Caco-2 (cell line): ENCODE measurements at regions of chr10 and their contacts with region 1.

Region 1: GRCh38 chr10:31928549-31929260 is at the start of gene ARHGAP12:
- DNase-seq: peak; percentile 95 to 99
- H3K4me3 ChIP-seq: peak within 1 kb of the TSS; percentile 80
- H3K4me3 Mint-ChIP-seq: peak within 1 kb of the TSS; percentile 76
- H3K27ac Mint-ChIP-seq: peak within 1 kb of the TSS; percentile 97
- H3K4me1 ChIP-seq: peaks cover 12% of the 10 kb centered on the region; the same call in 1 of the 2 replicates
- H3K4me1 Mint-ChIP-seq: peaks cover 40% of the 10 kb centered on the region
- H3K27me3 ChIP-seq: no peaks in the 10 kb centered on the region
- H3K27me3 Mint-ChIP-seq: no peaks in the 10 kb centered on the region
- CTCF ChIP-seq: no peak
- total RNA-seq, gene ARHGAP12: 62.3 and 63.1 TPM in 2 replicates

Region 2: DNA sequence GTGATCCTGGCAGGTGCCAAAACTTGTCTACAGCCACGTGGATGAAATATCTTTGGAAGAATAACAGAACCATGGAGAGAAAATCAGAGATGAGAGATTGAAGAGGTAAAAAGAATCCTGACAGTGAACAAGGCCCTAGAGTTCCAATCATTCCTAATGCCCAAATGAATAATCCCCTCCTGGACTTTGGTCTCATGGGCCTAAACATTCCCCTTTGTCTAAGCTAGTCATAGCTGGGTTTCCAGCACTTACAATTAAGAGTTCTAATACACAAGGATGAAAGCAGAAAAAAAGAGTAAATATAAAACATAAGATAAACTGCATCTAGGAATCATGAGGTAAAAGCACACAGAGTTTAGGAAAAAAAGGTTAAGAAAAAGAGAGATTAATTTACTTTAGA is 40.3 kb before region 1 on chr10:
- CTCF ChIA-PET with region 1: interaction called, 5 read pairs
- POLR2A ChIA-PET with region 1: no interaction called
- intact Hi-C with region 1: loop called (anchors 2 kb)
- DNase-seq: peak in 1 of 2 experiments; percentile 40
- H3K4me3 ChIP-seq: no peak overlapping the region
- H3K4me3 Mint-ChIP-seq: peak overlapping the region; percentile 59
- H3K27ac Mint-ChIP-seq: peak overlapping the region; percentile 84
- H3K4me1 ChIP-seq: peaks cover 50% of the 10 kb centered on the region
- H3K4me1 Mint-ChIP-seq: peaks cover 44% of the 10 kb centered on the region
- H3K27me3 ChIP-seq: no peaks in the 10 kb centered on the region
- H3K27me3 Mint-ChIP-seq: no peaks in the 10 kb centered on the region
- CTCF ChIP-seq: no peak

Region 3: DNA sequence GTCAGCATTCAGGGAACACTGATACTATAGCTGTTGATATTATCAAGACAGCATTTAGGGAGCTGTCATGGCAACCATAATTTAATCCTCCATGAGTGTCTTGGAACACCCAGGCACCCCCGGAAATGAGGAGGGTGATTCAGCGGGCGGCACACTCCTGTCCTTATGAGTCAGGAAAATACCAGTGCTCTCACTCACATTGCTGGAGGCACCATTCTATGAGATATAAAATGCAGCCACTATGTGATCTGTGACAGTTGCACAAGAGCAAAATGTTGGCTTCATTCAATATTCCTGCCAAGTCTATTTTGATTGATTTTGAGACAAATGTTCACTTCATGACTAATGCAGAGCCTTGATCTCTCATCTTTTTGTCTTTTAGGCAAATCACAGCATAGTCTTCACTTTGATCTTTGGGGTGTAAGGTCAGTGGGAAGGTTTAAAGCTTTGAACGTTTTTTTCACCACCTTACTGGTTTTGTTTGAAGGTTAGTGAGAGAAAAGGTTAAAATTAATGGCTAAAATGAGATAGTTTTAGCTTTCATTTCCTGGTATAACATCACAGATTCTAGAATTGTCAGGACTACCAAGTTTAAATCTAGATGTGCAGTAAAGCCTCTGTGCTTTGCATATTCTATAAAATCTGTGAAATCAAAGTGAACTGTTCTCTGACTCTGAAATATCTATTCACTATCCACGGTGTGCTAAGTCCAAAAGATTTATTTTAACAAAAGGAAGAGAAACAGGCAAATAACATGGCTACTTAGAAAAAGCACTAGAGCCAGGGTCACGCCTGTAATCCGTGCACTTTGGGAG is 12.3 kb after region 1 on chr10:
- CTCF ChIA-PET with region 1: interaction called, 6 read pairs
- POLR2A ChIA-PET with region 1: interaction called, 3 read pairs
- intact Hi-C with region 1: loop called (anchors 1 kb)
- DNase-seq: peak; percentile 70 to 84
- H3K4me3 ChIP-seq: no peak overlapping the region
- H3K4me3 Mint-ChIP-seq: peak overlapping the region; percentile 43
- H3K27ac Mint-ChIP-seq: peak overlapping the region; percentile 16
- H3K4me1 ChIP-seq: peaks cover 70% of the 10 kb centered on the region
- H3K4me1 Mint-ChIP-seq: peaks cover 47% of the 10 kb centered on the region
- H3K27me3 ChIP-seq: no peaks in the 10 kb centered on the region
- H3K27me3 Mint-ChIP-seq: no peaks in the 10 kb centered on the region
- CTCF ChIP-seq: no peak

Region 4: DNA sequence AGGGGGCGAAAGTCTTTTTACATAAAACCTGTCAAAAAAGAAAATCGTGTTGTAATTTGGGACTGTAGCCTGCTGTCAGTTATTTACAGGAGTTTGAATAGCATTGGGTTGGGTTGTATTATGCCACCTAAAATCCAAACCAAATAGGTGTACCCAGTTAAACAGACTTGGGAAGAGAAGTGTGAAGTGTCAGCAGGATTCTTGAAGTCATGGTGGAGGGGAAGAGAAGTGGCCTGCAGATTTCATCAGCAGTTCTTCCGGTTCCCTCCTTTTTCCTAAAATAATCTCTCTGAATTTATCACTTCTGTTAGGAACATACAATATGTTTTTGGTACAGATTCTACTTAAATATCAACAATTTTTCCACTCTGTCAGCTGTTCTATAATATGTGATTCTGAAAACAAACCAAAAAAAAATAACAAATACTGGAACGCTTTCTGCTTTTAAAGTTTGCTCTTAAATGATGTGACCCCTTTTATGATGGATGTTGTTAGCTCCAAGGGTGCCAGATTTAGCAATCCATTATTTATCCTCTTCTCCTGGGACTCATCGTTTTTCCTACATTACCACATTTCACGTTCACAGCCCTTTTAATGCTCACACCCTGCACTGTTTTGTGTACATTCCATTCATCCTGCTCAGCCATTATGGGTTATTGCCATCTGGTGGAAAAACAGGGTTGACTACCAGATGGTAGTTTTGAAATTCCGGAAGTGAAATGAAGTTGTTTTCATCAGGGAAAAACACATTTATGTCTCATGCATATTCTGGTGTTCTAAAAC is 18.6 kb after region 1 on chr10:
- CTCF ChIA-PET with region 1: interaction called, 6 read pairs
- POLR2A ChIA-PET with region 1: interaction called, 7 read pairs
- intact Hi-C with region 1: loop called (anchors 1 kb)
- DNase-seq: peak; percentile 74 to 84
- H3K4me3 ChIP-seq: peak overlapping the region; percentile 10
- H3K4me3 Mint-ChIP-seq: peak overlapping the region; percentile 65
- H3K27ac Mint-ChIP-seq: peak overlapping the region; percentile 70
- H3K4me1 ChIP-seq: peaks cover 42% of the 10 kb centered on the region
- H3K4me1 Mint-ChIP-seq: peaks cover 26% of the 10 kb centered on the region
- H3K27me3 ChIP-seq: no peaks in the 10 kb centered on the region
- H3K27me3 Mint-ChIP-seq: no peaks in the 10 kb centered on the region
- CTCF ChIP-seq: peak; percentile 47 to 82

Region 5: DNA sequence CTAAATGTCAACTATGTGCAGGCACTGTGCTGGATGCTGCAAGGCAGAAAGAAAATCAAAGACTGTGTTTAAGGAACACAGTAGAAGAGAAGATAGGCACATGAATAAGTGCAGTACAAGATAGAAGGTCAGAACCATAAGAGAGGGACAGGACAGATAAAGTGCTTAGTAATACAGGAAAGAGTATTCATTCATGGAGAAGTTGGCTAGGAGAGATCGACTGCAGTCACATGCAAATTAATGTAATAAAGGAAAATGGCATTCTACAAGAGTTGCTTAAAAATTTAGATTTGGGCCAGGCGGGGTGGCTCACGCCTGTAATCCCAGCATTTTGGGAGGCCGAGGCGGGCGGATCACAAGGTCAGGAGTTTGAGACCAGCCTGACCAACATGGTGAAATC is 102.7 kb after region 1 on chr10:
- CTCF ChIA-PET with region 1: no interaction called
- POLR2A ChIA-PET with region 1: no interaction called
- intact Hi-C with region 1: no loop called
- DNase-seq: no peak
- H3K4me3 ChIP-seq: no peak overlapping the region
- H3K4me3 Mint-ChIP-seq: no peak overlapping the region
- H3K27ac Mint-ChIP-seq: no peak overlapping the region
- H3K4me1 ChIP-seq: no peaks in the 10 kb centered on the region
- H3K4me1 Mint-ChIP-seq: no peaks in the 10 kb centered on the region
- H3K27me3 ChIP-seq: no peaks in the 10 kb centered on the region
- H3K27me3 Mint-ChIP-seq: no peaks in the 10 kb centered on the region
- CTCF ChIP-seq: no peak